ENCODE measurements at regions of chr9 and their contacts with region 1.

Region 1: DNA sequence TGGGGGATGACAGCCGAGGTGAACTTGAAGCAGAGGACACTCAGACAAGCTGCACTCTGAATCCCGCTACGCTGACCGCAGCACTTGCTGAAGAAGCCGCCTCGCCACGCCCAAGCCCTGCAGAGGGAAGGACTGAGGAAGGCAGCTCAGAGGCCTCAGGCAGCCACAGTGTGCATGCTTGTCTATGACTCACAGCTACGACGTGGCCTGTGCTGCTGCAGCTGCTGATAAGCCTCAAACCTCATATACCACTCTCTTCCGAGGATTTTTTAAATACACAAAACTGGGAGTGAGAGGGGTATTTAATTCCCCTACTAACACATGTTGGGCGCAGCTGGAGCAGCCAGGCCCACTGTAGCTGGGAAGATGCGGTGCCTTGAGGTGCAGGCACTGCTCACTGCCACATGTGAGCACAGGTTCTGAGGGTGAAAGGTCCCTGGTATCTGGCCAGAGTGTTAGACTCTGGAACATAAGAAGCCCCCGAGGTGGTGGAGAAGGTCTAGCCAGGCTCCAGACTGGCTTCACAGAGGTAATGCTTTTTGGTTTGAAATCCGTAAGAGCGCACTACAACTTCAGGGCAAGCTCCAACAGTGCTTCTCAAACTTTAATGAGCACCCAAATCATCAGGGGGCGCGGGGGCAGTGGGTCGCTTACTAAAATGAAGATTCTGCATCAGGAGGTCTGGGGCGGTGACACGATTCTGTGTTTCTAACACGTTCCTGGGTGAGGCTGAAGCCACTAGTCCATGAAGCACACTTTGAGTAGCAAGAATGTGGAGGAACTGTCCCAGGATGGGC is 196.8 kb downstream of the AUH start:
- DNase-seq: peak; percentile 91
- H3K4me3 Mint-ChIP-seq: peak overlapping the region; percentile 88
- H3K27ac Mint-ChIP-seq: peak overlapping the region; percentile 94
- H3K4me1 Mint-ChIP-seq: peaks cover 70% of the 10 kb centered on the region
- H3K27me3 Mint-ChIP-seq: no peaks in the 10 kb centered on the region

Region 2: GRCh38 chr9:90795871-90796317 is 369.0 kb before region 1 on chr9:
- CTCF ChIA-PET with region 1: no interaction called
- POLR2A ChIA-PET with region 1: no interaction called
- DNase-seq: no peak
- H3K4me3 Mint-ChIP-seq: no peak overlapping the region
- H3K27ac Mint-ChIP-seq: no peak overlapping the region
- H3K4me1 Mint-ChIP-seq: no peaks in the 10 kb centered on the region
- H3K27me3 Mint-ChIP-seq: peaks cover 47% of the 10 kb centered on the region

Region 3: GRCh38 chr9:91071185-91071990 is 93.5 kb before region 1 on chr9:
- CTCF ChIA-PET with region 1: interaction called, 3 read pairs
- POLR2A ChIA-PET with region 1: interaction called, 26 read pairs
- DNase-seq: peak; percentile 83
- H3K4me3 Mint-ChIP-seq: peak overlapping the region; percentile 31
- H3K27ac Mint-ChIP-seq: peak overlapping the region; percentile 77
- H3K4me1 Mint-ChIP-seq: peaks cover 33% of the 10 kb centered on the region
- H3K27me3 Mint-ChIP-seq: no peaks in the 10 kb centered on the region

Region 4: GRCh38 chr9:91131433-91131839 is 33.5 kb before region 1 on chr9:
- CTCF ChIA-PET with region 1: interaction called, 4 read pairs
- POLR2A ChIA-PET with region 1: interaction called, 85 read pairs
- DNase-seq: peak; percentile 90
- H3K4me3 Mint-ChIP-seq: peak overlapping the region; percentile 62
- H3K27ac Mint-ChIP-seq: peak overlapping the region; percentile 99
- H3K4me1 Mint-ChIP-seq: peaks cover 61% of the 10 kb centered on the region
- H3K27me3 Mint-ChIP-seq: no peaks in the 10 kb centered on the region

Region 5: GRCh38 chr9:91186518-91187108 is 21.7 kb after region 1 on chr9:
- CTCF ChIA-PET with region 1: interaction called, 10 read pairs
- POLR2A ChIA-PET with region 1: interaction called, 167 read pairs
- DNase-seq: peak; percentile 38
- H3K4me3 Mint-ChIP-seq: no peak overlapping the region
- H3K27ac Mint-ChIP-seq: peak overlapping the region; percentile 72
- H3K4me1 Mint-ChIP-seq: peaks cover 42% of the 10 kb centered on the region
- H3K27me3 Mint-ChIP-seq: no peaks in the 10 kb centered on the region

Region 6: GRCh38 chr9:91207729-91208418 is 43.0 kb after region 1 on chr9:
- CTCF ChIA-PET with region 1: no interaction called
- POLR2A ChIA-PET with region 1: interaction called, 16 read pairs
- DNase-seq: no peak
- H3K4me3 Mint-ChIP-seq: peak overlapping the region; percentile 58
- H3K27ac Mint-ChIP-seq: peak overlapping the region; percentile 86
- H3K4me1 Mint-ChIP-seq: peaks cover 57% of the 10 kb centered on the region
- H3K27me3 Mint-ChIP-seq: no peaks in the 10 kb centered on the region

Region 7: GRCh38 chr9:91253488-91253887 is 88.6 kb after region 1 on chr9:
- CTCF ChIA-PET with region 1: interaction called, 7 read pairs
- POLR2A ChIA-PET with region 1: interaction called, 23 read pairs
- DNase-seq: peak; percentile 66
- H3K4me3 Mint-ChIP-seq: no peak overlapping the region
- H3K27ac Mint-ChIP-seq: no peak overlapping the region
- H3K4me1 Mint-ChIP-seq: peaks cover 56% of the 10 kb centered on the region
- H3K27me3 Mint-ChIP-seq: no peaks in the 10 kb centered on the region

Region 8: GRCh38 chr9:91361291-91362050 is 196.5 kb after region 1 on chr9 and contains the start of gene AUH:
- CTCF ChIA-PET with region 1: interaction called, 4 read pairs
- POLR2A ChIA-PET with region 1: interaction called, 59 read pairs
- DNase-seq: peak; percentile 88
- H3K4me3 Mint-ChIP-seq: peak within 1 kb of the TSS; percentile 99
- H3K27ac Mint-ChIP-seq: peak within 1 kb of the TSS; percentile 94
- H3K4me1 Mint-ChIP-seq: peaks cover 55% of the 10 kb centered on the region
- H3K27me3 Mint-ChIP-seq: no peaks in the 10 kb centered on the region
- total RNA-seq, gene AUH: 34.8 to 39.3 TPM

Measured in activated CD4-positive, alpha-beta memory T cell treated with anti-CD3 and anti-CD28 coated beads, Interleukin-2, amount 10 ng/mL, durations not matched to agents 7 days and 5 days (primary cell).